Activated naive CD4-positive, alpha-beta T cell treated with anti-CD3 and anti-CD28 coated beads for 36 hours (primary cell): ENCODE measurements at regions of chr18 and their contacts with region 1.

Region 1: GRCh38 chr18:3062798-3063680 is 50.1 kb upstream of the LPIN2 start:
- DNase-seq: peak; percentile 89
- H3K4me3 Mint-ChIP-seq: peak overlapping the region; percentile 4
- H3K27ac Mint-ChIP-seq: no peak overlapping the region
- H3K4me1 Mint-ChIP-seq: peaks cover 64% of the 10 kb centered on the region
- H3K27me3 Mint-ChIP-seq: no peaks in the 10 kb centered on the region

Region 2: GRCh38 chr18:2641638-2642037 is 421.4 kb before region 1 on chr18:
- CTCF ChIA-PET with region 1: no interaction called
- intact Hi-C with region 1: loop called (anchors 5 kb)
- DNase-seq: no peak
- H3K4me3 Mint-ChIP-seq: peak overlapping the region; percentile 23
- H3K27ac Mint-ChIP-seq: peak overlapping the region; percentile 86
- H3K4me1 Mint-ChIP-seq: peaks cover 52% of the 10 kb centered on the region
- H3K27me3 Mint-ChIP-seq: no peaks in the 10 kb centered on the region

Region 3: DNA sequence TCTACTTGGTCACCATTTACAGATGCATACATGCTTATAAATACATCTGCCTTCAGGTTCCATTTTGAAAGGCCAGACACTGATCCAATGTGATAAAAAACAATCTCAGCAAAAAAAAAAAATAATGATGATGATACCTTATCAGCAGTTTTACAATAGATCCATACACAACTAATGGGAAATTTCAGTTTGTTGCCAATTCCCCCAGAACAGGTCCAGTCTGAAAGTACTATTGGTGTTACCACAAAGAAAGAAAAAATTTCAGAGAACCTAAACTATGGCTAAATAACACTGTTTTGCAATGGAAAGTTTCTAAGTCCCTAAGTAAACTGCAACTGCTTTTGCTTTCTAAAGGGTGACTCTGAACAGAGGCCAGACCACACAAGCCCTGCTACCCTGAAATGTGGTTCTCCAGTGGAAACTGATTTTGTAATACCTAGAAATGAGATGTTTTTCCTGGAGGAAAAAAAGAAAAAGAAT is 104.2 kb before region 1 on chr18:
- CTCF ChIA-PET with region 1: interaction called, 16 read pairs
- intact Hi-C with region 1: loop called (anchors 1 kb)
- DNase-seq: peak; percentile 44
- H3K4me3 Mint-ChIP-seq: peak overlapping the region; percentile 53
- H3K27ac Mint-ChIP-seq: peak overlapping the region; percentile 100
- H3K4me1 Mint-ChIP-seq: peaks cover 88% of the 10 kb centered on the region
- H3K27me3 Mint-ChIP-seq: no peaks in the 10 kb centered on the region

Region 4: GRCh38 chr18:3002732-3003131 is 60.3 kb before region 1 on chr18:
- CTCF ChIA-PET with region 1: interaction called, 133 read pairs
- intact Hi-C with region 1: loop called (anchors 1 kb)
- DNase-seq: no peak
- H3K4me3 Mint-ChIP-seq: no peak overlapping the region
- H3K27ac Mint-ChIP-seq: peak overlapping the region; percentile 52
- H3K4me1 Mint-ChIP-seq: peaks cover 65% of the 10 kb centered on the region
- H3K27me3 Mint-ChIP-seq: no peaks in the 10 kb centered on the region

Region 5: DNA sequence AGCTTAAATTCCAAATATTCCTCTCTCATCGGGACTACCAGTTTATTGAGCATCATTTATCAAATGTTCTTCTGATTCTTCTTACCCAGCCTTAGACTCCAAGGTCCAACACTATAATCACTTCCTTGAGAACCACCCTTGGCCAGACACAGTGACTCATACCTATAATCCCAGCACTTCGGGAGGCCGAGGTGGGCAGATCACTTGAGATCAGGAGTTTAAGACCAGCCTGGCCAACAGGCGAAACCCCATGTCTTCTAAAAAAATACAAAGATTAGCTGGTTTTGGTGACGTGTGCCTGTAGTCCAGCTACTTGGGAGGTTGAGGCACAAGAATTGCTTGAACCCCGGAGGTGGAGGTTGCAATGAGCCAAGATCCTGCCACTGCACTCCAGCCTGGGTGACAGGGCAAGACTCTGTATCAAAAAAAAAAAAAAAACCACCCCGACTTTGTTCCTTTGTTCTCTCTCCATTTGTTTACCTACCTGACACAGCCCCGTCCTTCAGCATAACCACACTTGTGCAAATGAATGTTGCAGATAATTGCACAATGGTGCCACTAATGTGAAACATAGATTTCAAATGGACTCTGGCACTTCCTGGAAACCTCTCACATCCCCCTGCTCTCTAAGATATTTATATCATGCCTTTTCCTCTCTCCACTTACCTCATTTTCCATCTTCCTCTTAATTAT is 11.2 kb before region 1 on chr18:
- CTCF ChIA-PET with region 1: interaction called, 22 read pairs
- intact Hi-C with region 1: no loop called
- DNase-seq: no peak
- H3K4me3 Mint-ChIP-seq: no peak overlapping the region
- H3K27ac Mint-ChIP-seq: peak overlapping the region; percentile 1
- H3K4me1 Mint-ChIP-seq: peaks cover 34% of the 10 kb centered on the region
- H3K27me3 Mint-ChIP-seq: no peaks in the 10 kb centered on the region

Region 6: DNA sequence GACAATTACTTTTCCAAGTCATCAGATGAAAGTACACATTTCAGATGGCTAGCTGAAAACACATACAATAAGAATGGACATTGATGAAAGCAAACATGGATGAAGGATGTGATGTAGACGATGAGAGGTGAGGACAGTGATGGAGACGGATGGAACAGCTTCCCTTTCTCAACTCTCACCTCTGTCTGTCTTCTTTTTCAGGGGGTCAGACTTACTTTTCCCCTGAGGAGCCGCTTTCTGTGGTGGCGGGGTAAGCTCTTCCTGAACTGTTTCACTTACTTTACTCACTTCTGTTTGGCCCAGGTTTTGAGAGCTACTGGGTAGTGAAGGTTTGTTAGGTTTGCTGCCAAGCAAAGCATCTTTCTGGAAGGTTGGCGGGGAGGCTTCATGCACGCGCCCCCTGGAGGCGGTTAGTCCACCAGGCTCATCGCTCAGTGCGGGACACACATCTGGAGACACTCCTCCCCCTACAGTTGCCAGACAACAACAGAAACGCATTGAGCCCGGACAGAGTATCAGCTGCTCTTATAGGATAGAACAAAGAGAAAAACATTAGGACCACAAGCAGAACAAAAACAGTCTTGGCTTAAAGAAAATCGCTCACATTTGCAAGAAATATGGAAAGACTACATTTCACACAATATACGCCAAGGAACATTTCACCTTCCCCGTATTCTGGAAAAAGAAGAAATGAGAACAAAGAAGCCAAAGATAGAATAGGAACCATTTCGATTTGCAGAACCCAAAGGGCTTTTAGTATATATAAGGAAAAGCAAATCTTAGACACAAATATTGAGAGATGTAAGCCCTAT is 66.2 kb after region 1 on chr18:
- CTCF ChIA-PET with region 1: interaction called, 35 read pairs
- intact Hi-C with region 1: loop called (anchors 1 kb)
- DNase-seq: peak; percentile 92
- H3K4me3 Mint-ChIP-seq: no peak overlapping the region
- H3K27ac Mint-ChIP-seq: no peak overlapping the region
- H3K4me1 Mint-ChIP-seq: peaks cover 10% of the 10 kb centered on the region
- H3K27me3 Mint-ChIP-seq: no peaks in the 10 kb centered on the region